ENCODE measurements at regions of chr12 and their contacts with region 1.

Region 1: GRCh38 chr12:67943226-67943892 is 45.9 kb upstream of the IFNG-AS1 start:
- DNase-seq: no peak
- ATAC-seq: peak; percentile 64 to 85 (median 72)
- H3K4me3 ChIP-seq: no peak overlapping the region
- H3K27ac ChIP-seq: peak overlapping the region; percentile 75
- H3K4me1 ChIP-seq: peaks cover 36% of the 10 kb centered on the region
- H3K27me3 ChIP-seq: no peaks in the 10 kb centered on the region
- CTCF ChIP-seq: peak; percentile 77

Region 2: DNA sequence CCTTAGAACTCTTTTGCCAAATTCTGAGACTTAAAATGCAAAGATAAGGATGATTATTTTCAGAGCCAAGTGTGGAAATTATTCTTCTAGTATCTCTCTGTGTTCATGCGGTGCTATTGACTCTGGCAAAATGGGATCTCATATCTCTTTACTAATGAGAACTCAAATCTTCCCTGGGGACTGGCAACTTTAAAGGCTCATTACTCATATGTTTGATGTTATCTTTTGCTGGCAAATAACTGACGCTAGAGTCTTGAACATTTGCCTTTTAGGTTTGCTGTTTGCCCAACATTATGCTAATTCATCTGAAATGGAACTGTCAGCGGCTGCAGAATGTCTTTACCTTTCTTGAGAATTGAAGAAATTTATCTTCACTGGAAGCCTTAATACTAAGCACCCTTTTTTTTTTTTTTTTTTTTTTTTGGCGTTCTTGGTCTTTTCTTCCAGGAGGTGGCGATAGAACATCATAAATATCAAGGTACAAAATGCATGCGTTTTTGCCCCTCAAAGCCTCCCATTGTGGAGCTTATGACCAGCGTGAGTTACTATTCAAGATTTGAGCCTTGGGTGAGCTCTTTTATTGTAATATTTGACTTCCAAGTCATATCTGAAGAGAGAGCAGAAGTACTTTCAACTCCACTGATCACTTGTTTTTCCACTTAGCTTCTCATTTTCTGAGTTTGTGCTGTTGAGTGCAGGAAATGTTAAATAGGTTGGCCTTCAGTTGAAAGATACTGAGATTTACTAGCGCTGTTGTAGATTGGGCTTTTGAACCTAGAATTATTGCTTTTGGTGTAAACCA is 587.6 kb before region 1 on chr12:
- intact Hi-C with region 1: loop called (anchors 2 kb)
- DNase-seq: no peak
- ATAC-seq: peak; percentile 61 to 85 (median 72)
- H3K4me3 ChIP-seq: peak overlapping the region; percentile 62
- H3K27ac ChIP-seq: peak overlapping the region; percentile 78
- H3K4me1 ChIP-seq: peaks cover 28% of the 10 kb centered on the region
- H3K27me3 ChIP-seq: no peaks in the 10 kb centered on the region
- CTCF ChIP-seq: peak; percentile 55

Region 3: DNA sequence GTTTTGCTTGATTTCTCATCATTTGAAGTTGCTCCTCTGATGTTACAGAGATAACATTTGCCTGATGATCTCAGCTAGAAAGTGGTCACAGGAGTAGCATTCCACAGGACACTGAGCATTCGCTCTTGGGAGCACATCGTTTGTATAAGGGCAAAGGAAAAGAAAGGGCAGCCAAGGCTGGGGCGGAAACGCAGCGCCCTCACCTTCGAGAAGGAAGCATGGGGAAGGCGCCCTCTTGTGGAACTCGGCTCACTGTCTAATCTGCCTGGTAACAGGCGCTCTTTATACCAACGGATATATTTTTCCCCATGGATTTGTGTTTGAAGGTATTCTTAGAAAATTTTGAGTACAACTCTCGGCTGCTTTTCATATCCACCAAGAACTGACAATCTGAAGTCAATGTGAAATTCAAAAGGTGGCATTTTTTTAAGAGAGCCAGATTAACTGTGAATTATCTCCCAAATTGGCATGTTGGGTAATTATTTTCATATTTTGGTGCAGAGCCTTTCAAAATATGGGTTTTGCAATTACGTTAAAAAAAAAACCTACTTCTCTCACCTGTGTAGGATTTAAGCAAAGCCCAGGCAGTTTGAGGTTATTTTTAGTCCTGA is 501.5 kb before region 1 on chr12:
- intact Hi-C with region 1: loop called (anchors 5 to 10 kb)
- DNase-seq: peak; percentile 87 to 92
- ATAC-seq: peak; percentile 95 to 98 (median 96)
- H3K4me3 ChIP-seq: peak overlapping the region; percentile 56
- H3K27ac ChIP-seq: peak overlapping the region; percentile 84
- H3K4me1 ChIP-seq: peaks cover 10% of the 10 kb centered on the region
- H3K27me3 ChIP-seq: no peaks in the 10 kb centered on the region
- CTCF ChIP-seq: peak; percentile 82

Region 4: GRCh38 chr12:67515679-67516340 is 427.5 kb before region 1 on chr12:
- intact Hi-C with region 1: loop called in 1 of 2 experiments (anchors 10 kb)
- DNase-seq: no peak
- ATAC-seq: peak; percentile 56 to 87 (median 74)
- H3K4me3 ChIP-seq: peak overlapping the region; percentile 43
- H3K27ac ChIP-seq: peak overlapping the region; percentile 84
- H3K4me1 ChIP-seq: peaks cover 34% of the 10 kb centered on the region
- H3K27me3 ChIP-seq: no peaks in the 10 kb centered on the region
- CTCF ChIP-seq: no peak

Region 5: DNA sequence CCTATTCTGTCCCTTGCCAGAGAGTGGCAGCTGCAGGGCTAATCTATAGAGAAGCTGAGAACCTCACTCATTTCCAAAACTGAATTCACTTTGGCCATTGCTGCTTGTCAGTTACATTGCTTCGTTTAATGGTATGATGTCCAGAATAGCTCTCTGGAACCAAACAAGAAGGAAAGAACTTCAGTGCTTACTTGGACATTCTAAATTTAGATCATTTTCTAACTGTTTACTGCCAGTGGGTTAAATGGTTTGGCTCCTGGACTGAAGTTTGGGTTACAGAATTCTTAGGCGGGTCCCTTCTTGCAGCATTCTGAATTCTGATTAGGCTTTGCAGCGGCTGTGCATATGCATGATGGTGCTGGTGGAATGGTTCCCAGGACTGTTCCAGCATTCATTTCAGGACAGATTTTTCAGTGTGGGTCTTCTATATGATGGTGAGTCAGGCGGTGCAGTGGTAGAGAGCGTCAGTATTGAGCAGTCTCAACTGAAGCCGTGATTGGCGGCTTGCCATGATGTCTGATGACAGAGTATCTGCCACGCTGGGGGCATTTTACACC is 146.1 kb before region 1 on chr12:
- intact Hi-C with region 1: loop called in 1 of 2 experiments (anchors 10 kb)
- DNase-seq: peak in 1 of 2 donors; percentile 67
- ATAC-seq: peak; percentile 93 to 96 (median 94)
- H3K4me3 ChIP-seq: peak overlapping the region; percentile 11
- H3K27ac ChIP-seq: peak overlapping the region; percentile 83
- H3K4me1 ChIP-seq: peaks cover 32% of the 10 kb centered on the region
- H3K27me3 ChIP-seq: no peaks in the 10 kb centered on the region
- CTCF ChIP-seq: no peak

Region 6: DNA sequence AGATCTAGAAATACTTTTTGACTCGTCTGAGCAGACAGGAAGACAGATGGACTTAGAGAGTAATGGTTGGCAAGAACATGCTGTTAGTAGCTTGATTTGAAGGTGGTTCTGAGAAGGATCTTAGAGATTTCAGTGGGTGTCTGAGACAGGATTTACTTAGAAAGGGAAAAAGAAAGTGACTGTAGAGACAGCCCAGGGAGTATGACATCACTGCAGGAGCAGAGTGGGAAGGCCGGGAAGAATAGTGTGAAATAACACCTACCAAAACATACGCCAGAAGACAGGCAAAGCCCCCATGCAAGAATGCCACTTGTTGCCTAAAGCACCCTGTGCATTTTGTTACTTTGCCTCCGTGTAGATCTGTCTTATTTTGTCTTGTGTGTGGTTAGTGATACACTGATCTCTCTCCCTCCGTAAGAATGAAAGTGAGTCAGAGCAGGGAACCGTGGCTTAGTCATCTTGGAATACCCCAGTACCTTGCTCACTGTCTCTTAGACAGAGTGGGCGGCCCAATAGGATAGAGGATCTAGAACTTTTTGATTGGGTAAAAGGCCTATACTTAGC is 115.5 kb before region 1 on chr12:
- intact Hi-C with region 1: loop called (anchors 5 to 10 kb)
- DNase-seq: peak in 1 of 2 donors; percentile 20
- ATAC-seq: peak; percentile 97 to 98 (median 98)
- H3K4me3 ChIP-seq: peak overlapping the region; percentile 62
- H3K27ac ChIP-seq: peak overlapping the region; percentile 95
- H3K4me1 ChIP-seq: peaks cover 24% of the 10 kb centered on the region
- H3K27me3 ChIP-seq: no peaks in the 10 kb centered on the region
- CTCF ChIP-seq: no peak

Region 7: DNA sequence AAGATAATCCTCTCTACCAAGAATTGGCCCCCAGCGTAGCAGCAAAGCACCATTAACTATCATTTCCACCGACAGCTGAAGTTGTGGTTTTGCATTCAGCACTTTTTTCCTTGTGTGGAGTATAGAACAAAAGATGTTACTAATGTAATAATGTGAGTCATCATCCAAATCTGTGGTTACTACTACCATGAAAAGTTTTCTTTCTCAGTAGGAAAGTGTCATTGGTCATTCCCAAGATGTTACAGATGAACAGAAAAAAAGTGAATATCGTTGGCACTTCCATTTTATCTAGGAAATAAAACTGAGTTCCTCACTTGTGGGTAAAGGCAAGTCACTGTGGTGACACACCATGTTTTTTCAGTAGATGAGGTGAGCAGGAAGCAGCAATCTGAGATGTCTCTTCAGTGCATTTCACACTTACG is 246.5 kb after region 1 on chr12:
- intact Hi-C with region 1: no loop called
- DNase-seq: no peak
- ATAC-seq: no peak
- H3K4me3 ChIP-seq: no peak overlapping the region
- H3K27ac ChIP-seq: no peak overlapping the region
- H3K4me1 ChIP-seq: no peaks in the 10 kb centered on the region
- H3K27me3 ChIP-seq: no peaks in the 10 kb centered on the region
- CTCF ChIP-seq: no peak

Measured in psoas muscle (tissue), 8 donors.